IMR-90 (cell line): ENCODE measurements at regions of chr2 and their contacts with region 1.

Region 1: GRCh38 chr2:199850718-199851500 is at the start of gene FTCDNL1:
- DNase-seq: peak; percentile 13
- ATAC-seq: peak; percentile 97
- H3K4me3 ChIP-seq: peak within 1 kb of the TSS; percentile 51
- H3K27ac ChIP-seq: no peak within 1 kb of the TSS
- H3K4me1 ChIP-seq: no peaks in the 10 kb centered on the region
- H3K27me3 ChIP-seq: peaks cover 34% of the 10 kb centered on the region
- CTCF ChIP-seq: peak; percentile 40
- POLR2A ChIP-seq: no peak
- RAD21 ChIP-seq: no peak
- total RNA-seq, gene FTCDNL1: 0.18 and 0.28 TPM in 2 replicates

Region 2: DNA sequence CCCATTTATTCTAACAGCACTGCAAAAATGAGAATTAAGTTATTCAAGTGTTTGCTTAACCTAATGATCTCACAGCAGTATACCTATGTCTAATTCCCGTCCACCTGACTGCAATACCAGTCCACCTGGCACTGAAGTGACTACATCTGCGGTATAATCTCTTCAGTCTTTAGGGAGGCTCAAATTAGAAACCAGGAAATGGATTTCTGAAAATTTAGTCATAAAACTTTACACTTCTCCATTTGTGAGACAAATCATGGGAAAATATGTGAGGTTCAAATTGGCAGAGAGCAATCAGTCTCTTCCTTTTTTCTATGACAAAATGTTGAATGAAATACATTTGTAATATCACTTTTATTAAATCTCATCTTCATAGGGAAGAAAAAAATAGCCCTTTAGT is 32.9 kb before region 1 on chr2:
- CTCF ChIA-PET with region 1: interaction called, 3 read pairs
- POLR2A ChIA-PET with region 1: interaction called, 3 read pairs
- dilution Hi-C with region 1: no loop called
- in situ Hi-C with region 1: no loop called
- intact Hi-C with region 1: loop called (anchors 5 kb)
- DNase-seq: no peak
- ATAC-seq: no peak
- H3K4me3 ChIP-seq: no peak overlapping the region
- H3K27ac ChIP-seq: no peak overlapping the region
- H3K4me1 ChIP-seq: peaks cover 4% of the 10 kb centered on the region; the same call in 1 of the 2 replicates
- H3K27me3 ChIP-seq: peaks cover 2% of the 10 kb centered on the region; the same call in 1 of the 2 replicates
- CTCF ChIP-seq: no peak
- POLR2A ChIP-seq: no peak
- RAD21 ChIP-seq: no peak

Region 3: GRCh38 chr2:199830531-199830930 is 20.4 kb before region 1 on chr2:
- CTCF ChIA-PET with region 1: no interaction called
- POLR2A ChIA-PET with region 1: no interaction called
- dilution Hi-C with region 1: no loop called
- in situ Hi-C with region 1: no loop called
- intact Hi-C with region 1: loop called (anchors 2 kb)
- DNase-seq: no peak
- ATAC-seq: no peak
- H3K4me3 ChIP-seq: no peak overlapping the region
- H3K27ac ChIP-seq: no peak overlapping the region
- H3K4me1 ChIP-seq: no peaks in the 10 kb centered on the region
- H3K27me3 ChIP-seq: peaks cover 6% of the 10 kb centered on the region
- CTCF ChIP-seq: no peak
- POLR2A ChIP-seq: no peak
- RAD21 ChIP-seq: no peak

Region 4: DNA sequence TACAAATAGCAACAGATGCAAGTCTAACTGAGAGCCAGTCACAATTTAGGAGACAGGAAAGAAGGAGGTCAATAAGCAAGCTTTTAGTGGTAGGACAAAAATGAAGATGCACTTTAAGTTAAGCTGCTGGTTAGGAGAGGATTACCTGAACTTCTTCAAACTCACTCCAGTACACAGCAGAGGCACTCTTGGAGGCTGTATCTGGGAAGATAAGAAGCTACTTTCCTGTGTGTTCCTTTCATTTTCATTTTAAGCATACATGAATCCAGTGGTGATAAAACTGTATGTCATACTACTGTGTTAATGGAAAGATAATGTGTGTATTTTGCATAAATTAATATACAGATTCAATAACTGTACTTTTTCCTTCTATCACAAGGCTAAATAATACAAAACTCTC is 1171.0 kb after region 1 on chr2:
- CTCF ChIA-PET with region 1: no interaction called
- POLR2A ChIA-PET with region 1: no interaction called
- dilution Hi-C with region 1: no loop called
- in situ Hi-C with region 1: no loop called
- intact Hi-C with region 1: no loop called
- DNase-seq: no peak
- ATAC-seq: no peak; the same call in 1 of the 2 replicates
- H3K4me3 ChIP-seq: no peak overlapping the region
- H3K27ac ChIP-seq: no peak overlapping the region
- H3K4me1 ChIP-seq: peaks cover under 1% of the 10 kb centered on the region; the same call in 1 of the 2 replicates
- H3K27me3 ChIP-seq: no peaks in the 10 kb centered on the region
- CTCF ChIP-seq: no peak
- POLR2A ChIP-seq: no peak
- RAD21 ChIP-seq: no peak